MCF 10A (cell line): ENCODE measurements at regions of chr3 and their contacts with region 1.

Region 1: GRCh38 chr3:172355839-172356238 is 92.4 kb downstream of the GHSR start:
- DNase-seq: peak; percentile 85
- H3K4me3 Mint-ChIP-seq: no peak overlapping the region
- H3K27ac Mint-ChIP-seq: peak overlapping the region; percentile 52
- H3K4me1 Mint-ChIP-seq: peaks cover 16% of the 10 kb centered on the region
- H3K27me3 Mint-ChIP-seq: no peaks in the 10 kb centered on the region
- CTCF ChIP-seq: no peak

Region 2: GRCh38 chr3:172341482-172342059 is 14.3 kb before region 1 on chr3:
- CTCF ChIA-PET with region 1: interaction called, 20 read pairs
- POLR2A ChIA-PET with region 1: interaction called, 8 read pairs
- intact Hi-C with region 1: no loop called
- DNase-seq: peak; percentile 67
- H3K4me3 Mint-ChIP-seq: no peak overlapping the region
- H3K27ac Mint-ChIP-seq: no peak overlapping the region
- H3K4me1 Mint-ChIP-seq: no peaks in the 10 kb centered on the region
- H3K27me3 Mint-ChIP-seq: no peaks in the 10 kb centered on the region
- CTCF ChIP-seq: peak; percentile 66